Activated B cell treated with CpG ODN at 0.5 μM for 24 hours (primary cell): ENCODE measurements at regions of chr6 and their contacts with region 1.

Region 1: GRCh38 chr6:27902335-27903314 is 9.6 kb downstream of the OR2B2 start:
- DNase-seq: peak; percentile 75
- ATAC-seq: peak; percentile 83
- H3K4me3 Mint-ChIP-seq: peak overlapping the region; percentile 89
- H3K27ac Mint-ChIP-seq: peak overlapping the region; percentile 96
- H3K4me1 Mint-ChIP-seq: peaks cover 10% of the 10 kb centered on the region
- H3K27me3 Mint-ChIP-seq: peaks cover 3% of the 10 kb centered on the region
- CTCF ChIP-seq: no peak

Region 2: DNA sequence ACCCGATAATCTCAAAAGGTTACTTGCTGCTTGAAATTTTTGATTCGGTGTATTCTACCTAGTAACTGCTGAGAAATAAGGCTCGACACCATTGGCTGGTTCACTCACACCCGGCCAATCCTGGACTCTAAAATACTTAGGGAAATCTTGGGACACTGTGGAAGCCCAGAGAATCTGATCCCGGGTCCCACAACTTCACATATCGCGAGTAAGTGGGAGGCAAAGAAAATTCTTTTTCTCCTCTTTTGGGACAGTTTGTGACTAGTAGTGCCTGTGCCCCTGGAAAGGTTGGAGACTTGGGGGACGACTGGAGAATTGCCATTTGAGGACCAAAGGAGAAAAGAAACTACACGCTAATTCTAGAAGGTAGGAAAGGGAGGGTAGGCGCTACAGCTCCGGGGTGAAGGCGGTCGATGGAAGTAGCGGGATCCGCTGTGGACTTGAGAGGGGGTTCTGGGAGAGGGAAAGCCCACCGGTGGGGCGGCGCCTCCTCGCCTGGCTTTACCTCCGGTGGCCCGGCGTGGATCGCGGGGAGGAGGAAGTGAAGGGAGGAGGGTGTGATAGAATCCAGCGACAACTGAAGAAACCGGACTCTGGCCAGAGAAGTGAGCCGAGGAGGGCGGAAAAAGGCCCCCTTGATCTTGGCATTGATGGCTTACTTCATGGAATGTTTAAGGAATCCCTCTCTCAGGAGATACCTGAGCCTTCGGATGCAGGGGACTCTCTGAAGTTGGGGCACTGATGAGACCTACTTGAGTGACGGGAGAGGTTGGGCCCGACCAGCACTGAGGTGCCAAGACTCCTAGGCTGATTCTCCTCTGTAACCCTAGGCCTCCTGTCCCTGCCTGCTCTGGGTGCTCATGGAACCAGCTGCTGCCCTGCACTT is 1481.1 kb before region 1 on chr6:
- CTCF ChIA-PET with region 1: no interaction called
- POLR2A ChIA-PET with region 1: no interaction called
- intact Hi-C with region 1: no loop called
- DNase-seq: peak; percentile 38
- ATAC-seq: peak; percentile 95
- H3K4me3 Mint-ChIP-seq: no peak overlapping the region
- H3K27ac Mint-ChIP-seq: peak overlapping the region; percentile 56
- H3K4me1 Mint-ChIP-seq: peaks cover 5% of the 10 kb centered on the region
- H3K27me3 Mint-ChIP-seq: no peaks in the 10 kb centered on the region
- CTCF ChIP-seq: no peak

Region 3: GRCh38 chr6:27188885-27189418 is 713.7 kb before region 1 on chr6:
- CTCF ChIA-PET with region 1: no interaction called
- POLR2A ChIA-PET with region 1: no interaction called
- intact Hi-C with region 1: loop called (anchors 2 kb)
- DNase-seq: no peak
- ATAC-seq: peak; percentile 80
- H3K4me3 Mint-ChIP-seq: peak overlapping the region; percentile 83
- H3K27ac Mint-ChIP-seq: peak overlapping the region; percentile 19
- H3K4me1 Mint-ChIP-seq: peaks cover 8% of the 10 kb centered on the region
- H3K27me3 Mint-ChIP-seq: peaks cover 2% of the 10 kb centered on the region
- CTCF ChIP-seq: no peak

Region 4: DNA sequence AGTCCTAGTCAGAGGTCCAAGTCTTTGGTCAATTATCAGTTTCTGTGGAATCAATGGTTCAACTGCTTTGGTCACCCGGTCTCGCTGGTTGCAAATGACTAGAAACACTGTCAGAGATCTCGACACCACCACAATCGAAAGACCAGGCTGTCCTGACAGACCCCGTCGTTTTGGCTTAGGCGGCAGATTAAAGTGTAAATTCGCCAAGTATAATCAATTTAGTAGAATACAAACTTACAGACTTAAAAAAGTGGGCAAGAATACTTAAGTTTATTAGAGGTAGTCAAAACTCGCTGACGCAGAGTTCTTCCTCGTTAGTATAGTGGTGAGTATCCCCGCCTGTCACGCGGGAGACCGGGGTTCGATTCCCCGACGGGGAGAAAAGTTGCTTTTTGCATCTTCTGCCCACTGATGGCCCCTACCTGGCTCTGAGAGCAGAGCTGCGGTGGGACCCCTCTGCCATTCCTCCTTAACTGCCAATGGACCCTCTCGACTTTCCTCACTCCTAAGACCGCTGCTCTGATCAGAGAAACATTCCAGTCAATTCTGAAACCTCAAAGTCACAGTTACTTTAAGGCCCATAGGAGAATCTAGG is 399.1 kb before region 1 on chr6:
- CTCF ChIA-PET with region 1: no interaction called
- POLR2A ChIA-PET with region 1: no interaction called
- intact Hi-C with region 1: loop called (anchors 5 kb)
- DNase-seq: peak; percentile 61
- ATAC-seq: peak; percentile 39
- H3K4me3 Mint-ChIP-seq: peak overlapping the region; percentile 87
- H3K27ac Mint-ChIP-seq: peak overlapping the region; percentile 77
- H3K4me1 Mint-ChIP-seq: peaks cover 35% of the 10 kb centered on the region
- H3K27me3 Mint-ChIP-seq: peaks cover 12% of the 10 kb centered on the region
- CTCF ChIP-seq: no peak

Region 5: DNA sequence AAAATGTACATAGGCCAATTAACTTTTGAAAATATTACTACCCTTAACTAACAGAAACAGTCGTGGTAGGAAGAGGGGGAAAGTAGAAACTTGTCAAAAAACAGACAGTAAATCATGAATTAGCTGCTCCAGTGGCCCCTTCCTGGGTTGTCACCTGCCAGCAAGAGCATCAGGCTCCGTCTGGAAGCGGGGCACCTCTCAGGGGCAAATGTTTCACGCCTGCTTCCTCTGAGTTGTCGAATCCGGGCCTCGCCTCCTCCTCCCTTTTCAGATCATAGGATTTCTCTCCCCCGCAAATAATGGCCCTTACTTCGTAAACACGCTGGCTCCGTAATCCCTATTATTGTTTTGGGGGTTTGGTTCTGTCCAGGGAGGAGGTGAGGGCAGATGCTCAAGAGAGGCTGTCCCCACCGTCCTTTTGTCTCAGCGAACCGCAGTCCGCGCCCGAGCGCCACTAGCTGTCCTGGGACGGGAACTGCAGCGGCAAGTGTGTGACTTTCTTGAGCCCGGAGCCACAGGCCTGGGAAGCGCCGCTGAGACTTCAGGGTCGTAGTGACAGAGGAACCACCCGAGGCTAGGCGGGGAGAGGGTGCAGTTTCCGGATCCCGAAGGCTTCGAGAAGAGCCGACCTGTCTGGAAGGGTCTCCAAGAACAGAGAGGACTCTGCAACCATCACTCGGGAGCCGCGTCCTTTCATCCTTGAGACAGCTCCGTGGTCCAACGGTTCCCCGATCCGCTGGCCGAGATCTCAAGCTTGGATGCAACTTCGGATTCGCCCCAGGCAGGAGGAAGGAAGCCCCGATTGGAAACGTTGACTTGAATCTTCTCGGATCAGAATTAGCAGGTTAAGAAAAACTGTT is 215.2 kb before region 1 on chr6:
- CTCF ChIA-PET with region 1: no interaction called
- POLR2A ChIA-PET with region 1: interaction called, 3 read pairs
- intact Hi-C with region 1: loop called (anchors 1 kb)
- DNase-seq: peak; percentile 63
- ATAC-seq: peak; percentile 73
- H3K4me3 Mint-ChIP-seq: peak overlapping the region; percentile 93
- H3K27ac Mint-ChIP-seq: peak overlapping the region; percentile 90
- H3K4me1 Mint-ChIP-seq: peaks cover 16% of the 10 kb centered on the region
- H3K27me3 Mint-ChIP-seq: peaks cover 4% of the 10 kb centered on the region
- CTCF ChIP-seq: no peak

Region 6: DNA sequence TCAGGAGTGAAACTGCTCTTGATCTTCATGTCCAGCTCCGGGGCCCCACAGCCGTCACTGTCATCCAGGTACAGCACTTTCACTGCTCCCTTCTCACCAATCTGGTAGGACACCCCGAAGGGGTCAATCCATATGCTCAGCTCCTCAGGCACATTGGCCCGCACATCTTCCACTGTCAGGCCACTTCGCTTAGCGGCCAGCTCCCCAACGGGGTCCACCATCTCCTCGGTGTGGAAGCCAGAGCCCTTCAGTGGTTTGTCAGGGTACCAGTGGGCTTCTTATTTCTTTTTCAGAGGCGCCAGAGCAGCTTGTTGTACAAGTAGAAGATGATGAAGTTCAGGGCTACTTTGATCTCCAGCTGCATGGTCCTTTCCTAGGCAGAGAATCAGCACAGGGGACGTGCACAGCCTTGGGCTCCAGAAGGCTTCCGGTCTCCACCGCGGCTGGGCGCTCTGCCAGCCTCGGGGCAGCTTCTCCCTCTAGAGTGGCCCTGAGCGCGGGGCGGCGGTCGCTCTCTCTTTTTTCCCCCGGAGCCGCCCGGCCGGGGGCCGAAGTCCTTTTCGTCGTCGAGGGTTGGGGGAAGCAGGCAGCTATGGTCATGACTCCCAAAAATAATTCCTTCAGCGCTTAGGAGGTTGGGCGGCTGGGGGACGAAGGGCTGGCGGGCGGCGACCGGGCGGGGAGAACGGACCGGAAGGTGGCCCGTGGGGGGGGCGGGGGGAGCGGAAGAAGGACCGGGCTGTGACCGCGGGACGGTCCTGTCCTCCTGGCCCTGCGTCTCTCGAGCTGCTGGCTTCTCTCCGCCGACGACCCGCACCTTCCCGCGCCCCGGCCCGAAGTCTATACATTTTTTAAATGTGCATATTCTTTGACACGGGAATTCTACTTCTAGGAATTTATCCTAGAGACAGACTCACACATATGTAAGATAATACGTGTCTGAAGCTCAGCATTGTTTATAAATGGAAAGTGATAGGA is 315.9 kb after region 1 on chr6:
- CTCF ChIA-PET with region 1: no interaction called
- POLR2A ChIA-PET with region 1: no interaction called
- intact Hi-C with region 1: loop called (anchors 5 kb)
- DNase-seq: peak; percentile 44
- ATAC-seq: peak; percentile 82
- H3K4me3 Mint-ChIP-seq: peak overlapping the region; percentile 89
- H3K27ac Mint-ChIP-seq: no peak overlapping the region
- H3K4me1 Mint-ChIP-seq: peaks cover 13% of the 10 kb centered on the region
- H3K27me3 Mint-ChIP-seq: peaks cover 54% of the 10 kb centered on the region
- CTCF ChIP-seq: no peak

Region 7: DNA sequence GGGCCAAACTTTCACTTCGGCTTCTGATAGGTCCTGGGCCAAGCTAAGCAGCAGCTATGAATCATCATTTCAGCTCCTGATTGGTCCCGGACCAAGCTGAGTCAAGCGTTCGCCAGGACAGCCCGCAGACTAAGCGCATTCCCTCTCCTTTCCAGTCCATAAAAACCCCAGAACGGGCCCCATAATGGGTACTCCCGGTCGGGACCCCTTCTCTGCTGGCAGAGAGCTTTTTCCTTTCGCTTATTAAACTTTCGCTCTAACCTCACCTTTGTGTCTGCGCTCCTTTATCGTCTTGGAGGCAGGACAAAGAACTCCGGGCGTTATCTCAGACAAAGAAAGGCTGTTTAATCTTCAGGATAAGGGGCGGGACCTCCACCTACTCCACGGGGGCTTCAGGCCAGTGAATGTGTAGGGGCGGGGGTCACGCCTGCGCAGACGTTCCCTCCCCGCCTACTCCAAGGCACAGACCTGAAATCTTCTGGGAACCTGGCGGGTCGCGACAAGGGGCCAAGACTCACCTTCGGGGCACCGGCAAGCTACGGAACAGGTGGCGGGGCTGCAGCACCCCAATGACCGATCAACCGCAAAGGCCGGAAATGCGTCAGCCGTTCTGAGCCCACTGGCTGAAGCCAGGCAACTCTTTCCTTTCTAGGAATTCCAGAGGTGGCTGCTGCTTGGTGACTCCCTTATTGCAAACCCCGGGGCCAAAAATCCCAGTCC is 433.1 kb after region 1 on chr6 and contains the start of gene ZSCAN31:
- CTCF ChIA-PET with region 1: no interaction called
- POLR2A ChIA-PET with region 1: no interaction called
- intact Hi-C with region 1: loop called (anchors 5 kb)
- DNase-seq: peak; percentile 61
- ATAC-seq: peak; percentile 93
- H3K4me3 Mint-ChIP-seq: no peak within 1 kb of the TSS
- H3K27ac Mint-ChIP-seq: no peak within 1 kb of the TSS
- H3K4me1 Mint-ChIP-seq: no peaks in the 10 kb centered on the region
- H3K27me3 Mint-ChIP-seq: no peaks in the 10 kb centered on the region
- CTCF ChIP-seq: no peak
- total RNA-seq, gene ZSCAN31: 1.0 and 3.6 TPM in 2 replicates

Region 8: GRCh38 chr6:28940858-28941680 is 1038.4 kb after region 1 on chr6:
- CTCF ChIA-PET with region 1: no interaction called
- POLR2A ChIA-PET with region 1: no interaction called
- intact Hi-C with region 1: loop called (anchors 5 kb)
- DNase-seq: peak; percentile 36
- ATAC-seq: peak; percentile 66
- H3K4me3 Mint-ChIP-seq: peak overlapping the region; percentile 95
- H3K27ac Mint-ChIP-seq: peak overlapping the region; percentile 88
- H3K4me1 Mint-ChIP-seq: peaks cover 47% of the 10 kb centered on the region
- H3K27me3 Mint-ChIP-seq: peaks cover 3% of the 10 kb centered on the region
- CTCF ChIP-seq: no peak